ENCODE measurements at regions of chr18 and their contacts with region 1.

Region 1: GRCh38 chr18:49447810-49448745 is 12.4 kb downstream of the DYM start:
- DNase-seq: peak; percentile 19
- H3K4me3 Mint-ChIP-seq: no peak overlapping the region
- H3K27ac Mint-ChIP-seq: no peak overlapping the region
- H3K4me1 Mint-ChIP-seq: peaks cover 9% of the 10 kb centered on the region
- H3K27me3 Mint-ChIP-seq: no peaks in the 10 kb centered on the region

Region 2: DNA sequence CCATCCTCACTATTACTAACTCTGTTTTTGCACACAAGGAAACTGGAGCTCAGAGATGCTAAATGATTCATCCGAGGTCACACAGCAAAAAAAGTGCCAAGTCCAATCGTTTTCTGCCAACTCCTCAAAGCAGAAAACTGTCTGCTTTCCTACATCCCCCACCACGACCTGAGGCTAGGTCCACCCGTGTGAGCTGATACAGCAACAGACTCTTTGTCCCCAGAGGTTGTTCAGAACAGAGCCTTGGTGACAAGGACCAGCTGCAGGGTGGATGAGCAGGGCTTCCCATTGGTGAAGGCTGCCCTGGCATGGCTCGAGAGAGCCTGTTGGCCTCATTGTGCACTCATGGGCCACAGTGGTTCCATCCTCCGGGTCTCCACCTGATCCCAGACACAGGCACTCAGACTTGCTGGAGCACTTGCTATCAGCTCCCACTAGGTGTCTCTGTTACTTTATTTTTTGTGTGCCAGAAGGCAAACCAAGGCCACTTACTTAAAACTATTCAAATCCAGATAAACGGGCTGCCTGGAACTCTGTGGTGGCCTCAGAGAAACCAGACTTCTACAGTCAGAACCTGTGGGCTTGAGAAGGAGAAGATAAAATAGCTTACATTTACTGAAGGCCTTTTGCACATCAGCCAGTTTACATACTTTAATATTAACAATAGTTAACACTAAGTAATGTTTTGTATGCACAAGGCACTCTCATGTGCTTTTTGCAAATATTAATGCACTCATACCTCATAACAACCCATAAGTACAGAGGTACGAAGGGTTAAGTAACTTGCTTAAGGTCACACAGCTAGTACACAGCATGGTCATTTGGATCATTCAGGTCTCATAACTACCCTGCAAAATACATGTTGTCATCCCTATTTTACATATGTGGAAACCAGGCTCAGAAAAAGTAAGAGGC is 972.2 kb before region 1 on chr18:
- intact Hi-C with region 1: loop called (anchors 5 kb)
- DNase-seq: peak; percentile 22
- H3K4me3 Mint-ChIP-seq: no peak overlapping the region
- H3K27ac Mint-ChIP-seq: no peak overlapping the region
- H3K4me1 Mint-ChIP-seq: no peaks in the 10 kb centered on the region
- H3K27me3 Mint-ChIP-seq: peaks cover 24% of the 10 kb centered on the region

Region 3: GRCh38 chr18:49021433-49022129 is 426.5 kb before region 1 on chr18:
- intact Hi-C with region 1: loop called (anchors 1 kb)
- DNase-seq: peak; percentile 28
- H3K4me3 Mint-ChIP-seq: no peak overlapping the region
- H3K27ac Mint-ChIP-seq: no peak overlapping the region
- H3K4me1 Mint-ChIP-seq: no peaks in the 10 kb centered on the region
- H3K27me3 Mint-ChIP-seq: no peaks in the 10 kb centered on the region

Region 4: GRCh38 chr18:49041435-49042245 is 406.4 kb before region 1 on chr18:
- intact Hi-C with region 1: loop called (anchors 5 kb)
- DNase-seq: no peak
- H3K4me3 Mint-ChIP-seq: no peak overlapping the region
- H3K27ac Mint-ChIP-seq: no peak overlapping the region
- H3K4me1 Mint-ChIP-seq: peaks cover 6% of the 10 kb centered on the region
- H3K27me3 Mint-ChIP-seq: no peaks in the 10 kb centered on the region

Region 5: DNA sequence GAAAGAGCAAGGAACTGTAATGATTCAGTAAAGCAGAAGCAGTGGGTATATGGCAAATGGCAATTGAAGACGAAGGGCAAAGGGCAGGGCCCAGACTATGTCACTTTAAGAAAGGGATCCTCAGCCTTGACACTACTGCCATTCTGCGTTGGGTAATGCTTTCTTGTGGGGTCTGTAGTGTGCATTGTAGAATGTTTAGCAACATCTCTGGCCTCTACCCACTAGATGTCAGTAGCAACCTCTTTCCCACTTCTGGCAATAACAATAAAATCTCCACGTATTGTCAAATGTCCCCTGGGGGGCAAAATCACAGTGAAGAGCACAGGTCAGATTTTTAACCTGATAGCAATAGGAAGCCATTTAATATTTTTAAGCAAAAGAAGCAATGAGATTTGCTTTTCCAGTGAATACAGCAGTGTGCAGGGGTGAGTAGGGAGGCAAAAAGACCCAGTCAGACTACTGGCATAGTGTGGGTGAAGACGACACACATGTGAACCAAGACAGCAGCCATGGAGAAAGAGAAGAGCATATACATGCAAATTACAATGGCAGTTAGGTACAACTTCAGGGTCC is 197.2 kb before region 1 on chr18:
- intact Hi-C with region 1: loop called (anchors 1 kb)
- DNase-seq: no peak
- H3K4me3 Mint-ChIP-seq: no peak overlapping the region
- H3K27ac Mint-ChIP-seq: no peak overlapping the region
- H3K4me1 Mint-ChIP-seq: no peaks in the 10 kb centered on the region
- H3K27me3 Mint-ChIP-seq: no peaks in the 10 kb centered on the region

Region 6: GRCh38 chr18:49412679-49413078 is 35.4 kb before region 1 on chr18:
- intact Hi-C with region 1: loop called (anchors 1 kb)
- DNase-seq: no peak
- H3K4me3 Mint-ChIP-seq: no peak overlapping the region
- H3K27ac Mint-ChIP-seq: peak overlapping the region; percentile 9
- H3K4me1 Mint-ChIP-seq: peaks cover 24% of the 10 kb centered on the region
- H3K27me3 Mint-ChIP-seq: no peaks in the 10 kb centered on the region